ENCODE measurements at regions of chr1 and their contacts with region 1.

Region 1: GRCh38 chr1:97780884-97781283 is 139.9 kb downstream of the DPYD start:
- DNase-seq: no peak
- H3K4me3 ChIP-seq: no peak overlapping the region
- H3K27ac ChIP-seq: no peak overlapping the region
- H3K4me1 ChIP-seq: no peaks in the 10 kb centered on the region
- H3K27me3 ChIP-seq: no peaks in the 10 kb centered on the region
- CTCF ChIP-seq: no peak

Region 2: DNA sequence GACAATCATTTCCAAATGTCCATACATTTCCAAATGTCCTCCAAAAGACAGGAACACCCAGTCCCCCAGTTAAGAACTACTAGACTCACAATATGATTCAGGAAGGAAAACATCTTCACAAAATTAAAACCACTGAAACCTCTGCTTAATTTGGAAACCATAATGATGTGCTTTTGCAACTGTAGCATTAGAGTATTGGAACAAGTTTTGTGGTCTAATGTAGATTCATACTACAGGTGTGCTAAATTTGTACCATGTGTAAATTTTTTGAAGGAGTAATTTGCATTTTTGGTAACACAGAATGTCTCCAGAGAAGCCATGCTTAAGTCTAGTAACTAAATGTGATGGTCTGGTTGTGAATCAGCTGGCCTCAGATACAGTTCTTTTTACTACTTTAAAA is 10.4 kb after region 1 on chr1:
- intact Hi-C with region 1: loop called (anchors 1 kb)
- DNase-seq: no peak
- H3K4me3 ChIP-seq: no peak overlapping the region
- H3K27ac ChIP-seq: no peak overlapping the region
- H3K4me1 ChIP-seq: no peaks in the 10 kb centered on the region
- H3K27me3 ChIP-seq: no peaks in the 10 kb centered on the region
- CTCF ChIP-seq: no peak